Endothelial cell of umbilical vein (primary cell): ENCODE measurements at regions of chr1 and their contacts with region 1.

Region 1: GRCh38 chr1:51768971-51769588 is 109.4 kb downstream of the NRDC start:
- DNase-seq: peak; percentile 70
- H3K4me3 ChIP-seq: no peak overlapping the region
- H3K27ac ChIP-seq: no peak overlapping the region
- H3K4me1 ChIP-seq: no peaks in the 10 kb centered on the region
- H3K27me3 ChIP-seq: no peaks in the 10 kb centered on the region
- CTCF ChIP-seq: peak; percentile 63 to 66
- POLR2A ChIP-seq: no peak

Region 2: GRCh38 chr1:51569284-51570062 is 199.6 kb before region 1 on chr1:
- CTCF ChIA-PET with region 1: interaction called, 24 read pairs
- POLR2A ChIA-PET with region 1: no interaction called
- dilution Hi-C with region 1: no loop called
- intact Hi-C with region 1: loop called (anchors 1 kb)
- DNase-seq: peak; percentile 77
- H3K4me3 ChIP-seq: no peak overlapping the region
- H3K27ac ChIP-seq: peak overlapping the region; percentile 64
- H3K4me1 ChIP-seq: peaks cover 21% of the 10 kb centered on the region
- H3K27me3 ChIP-seq: no peaks in the 10 kb centered on the region
- CTCF ChIP-seq: peak in 1 of 2 donors; percentile 3
- POLR2A ChIP-seq: no peak

Region 3: DNA sequence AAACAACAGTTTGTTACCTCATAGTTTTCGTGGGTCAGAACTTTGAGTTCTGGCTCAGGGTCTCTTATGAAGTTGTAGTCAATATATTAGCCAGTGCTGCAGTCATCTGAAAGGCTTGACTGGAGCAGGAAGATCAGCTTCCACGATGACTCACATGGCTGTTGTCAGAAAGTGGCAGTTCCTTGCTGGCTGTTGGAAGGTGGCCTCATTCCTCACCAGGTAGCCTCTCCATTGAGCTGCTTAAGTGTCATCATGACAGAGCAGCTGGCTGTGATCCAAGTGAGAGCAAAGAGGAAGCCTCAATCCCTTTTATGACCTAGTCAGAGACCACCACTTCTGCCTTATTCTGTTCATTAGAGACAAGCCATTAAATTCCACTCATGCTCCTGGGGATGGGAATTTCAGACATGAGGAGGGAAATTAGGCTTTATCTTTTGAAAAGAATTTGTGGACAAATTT is 146.6 kb before region 1 on chr1:
- CTCF ChIA-PET with region 1: interaction called, 71 read pairs
- POLR2A ChIA-PET with region 1: no interaction called
- dilution Hi-C with region 1: no loop called
- intact Hi-C with region 1: loop called (anchors 1 kb)
- DNase-seq: peak; percentile 55
- H3K4me3 ChIP-seq: no peak overlapping the region
- H3K27ac ChIP-seq: no peak overlapping the region
- H3K4me1 ChIP-seq: peaks cover 29% of the 10 kb centered on the region
- H3K27me3 ChIP-seq: no peaks in the 10 kb centered on the region
- CTCF ChIP-seq: no peak
- POLR2A ChIP-seq: no peak

Region 4: GRCh38 chr1:51661081-51661518 is 108.0 kb before region 1 on chr1:
- CTCF ChIA-PET with region 1: interaction called, 13 read pairs
- POLR2A ChIA-PET with region 1: no interaction called
- dilution Hi-C with region 1: no loop called
- intact Hi-C with region 1: loop called (anchors 1 kb)
- DNase-seq: peak; percentile 93
- H3K4me3 ChIP-seq: no peak overlapping the region
- H3K27ac ChIP-seq: peak overlapping the region; percentile 82
- H3K4me1 ChIP-seq: peaks cover 32% of the 10 kb centered on the region
- H3K27me3 ChIP-seq: no peaks in the 10 kb centered on the region
- CTCF ChIP-seq: no peak
- POLR2A ChIP-seq: no peak

Region 5: DNA sequence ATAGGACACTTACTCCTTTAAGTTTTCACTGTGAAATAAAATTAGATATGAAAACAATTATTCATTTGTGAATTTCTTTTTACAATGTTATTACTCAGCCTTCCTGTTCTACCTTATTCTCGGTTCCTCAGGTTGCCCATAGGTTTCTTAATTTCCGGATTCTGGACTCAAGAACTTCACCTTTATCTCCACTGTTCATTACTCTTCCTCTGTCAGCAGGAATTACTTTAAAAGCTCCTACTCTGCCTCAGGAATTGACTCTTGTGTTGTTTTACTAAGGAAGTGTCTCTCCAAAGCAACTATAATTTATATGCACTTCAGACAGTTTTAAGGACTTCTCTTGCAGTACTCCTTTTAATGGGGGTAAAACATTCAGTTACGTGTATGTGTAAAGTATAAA is 28.4 kb before region 1 on chr1:
- CTCF ChIA-PET with region 1: interaction called, 10 read pairs
- POLR2A ChIA-PET with region 1: no interaction called
- dilution Hi-C with region 1: no loop called
- intact Hi-C with region 1: no loop called
- DNase-seq: peak; percentile 54
- H3K4me3 ChIP-seq: no peak overlapping the region
- H3K27ac ChIP-seq: no peak overlapping the region
- H3K4me1 ChIP-seq: peaks cover 35% of the 10 kb centered on the region
- H3K27me3 ChIP-seq: no peaks in the 10 kb centered on the region
- CTCF ChIP-seq: no peak
- POLR2A ChIP-seq: no peak